H1 (cell line): ENCODE measurements at regions of chr16 and their contacts with region 1.

Region 1: DNA sequence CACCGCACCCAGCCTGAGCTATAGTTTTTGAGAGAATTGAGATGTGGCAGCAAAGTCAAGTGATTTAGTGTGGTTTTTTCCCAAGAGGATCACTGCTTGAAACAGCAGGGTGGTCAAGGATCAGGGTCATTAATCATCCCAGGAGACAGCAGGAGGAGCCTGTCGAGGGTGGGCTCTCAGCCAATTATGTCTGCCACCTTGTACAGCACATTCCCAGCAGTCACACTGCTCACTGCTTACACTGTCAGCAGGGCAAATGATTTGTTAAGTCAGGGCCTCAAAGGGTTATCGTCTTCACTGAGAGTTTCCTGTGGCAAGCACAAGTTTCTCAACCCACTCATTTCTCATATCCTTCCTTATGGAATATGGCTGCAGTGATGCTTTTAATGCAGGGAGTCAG is 13.2 kb downstream of the B3GNT9 start:
- DNase-seq: no peak
- H3K4me3 ChIP-seq: no peak overlapping the region
- H3K27ac ChIP-seq: no peak overlapping the region
- H3K4me1 ChIP-seq: no peaks in the 10 kb centered on the region
- H3K27me3 ChIP-seq: no peaks in the 10 kb centered on the region
- CTCF ChIP-seq: no peak
- EP300 ChIP-seq: no peak
- POLR2A ChIP-seq: no peak
- RAD21 ChIP-seq: no peak

Region 2: GRCh38 chr16:67055712-67056487 is 81.7 kb before region 1 on chr16:
- CTCF ChIA-PET with region 1: no interaction called
- POLR2A ChIA-PET with region 1: no interaction called
- DNase-seq: no peak
- H3K4me3 ChIP-seq: no peak overlapping the region
- H3K27ac ChIP-seq: no peak overlapping the region
- H3K4me1 ChIP-seq: no peaks in the 10 kb centered on the region
- H3K27me3 ChIP-seq: no peaks in the 10 kb centered on the region
- CTCF ChIP-seq: no peak
- EP300 ChIP-seq: no peak
- POLR2A ChIP-seq: no peak
- RAD21 ChIP-seq: no peak

Region 3: DNA sequence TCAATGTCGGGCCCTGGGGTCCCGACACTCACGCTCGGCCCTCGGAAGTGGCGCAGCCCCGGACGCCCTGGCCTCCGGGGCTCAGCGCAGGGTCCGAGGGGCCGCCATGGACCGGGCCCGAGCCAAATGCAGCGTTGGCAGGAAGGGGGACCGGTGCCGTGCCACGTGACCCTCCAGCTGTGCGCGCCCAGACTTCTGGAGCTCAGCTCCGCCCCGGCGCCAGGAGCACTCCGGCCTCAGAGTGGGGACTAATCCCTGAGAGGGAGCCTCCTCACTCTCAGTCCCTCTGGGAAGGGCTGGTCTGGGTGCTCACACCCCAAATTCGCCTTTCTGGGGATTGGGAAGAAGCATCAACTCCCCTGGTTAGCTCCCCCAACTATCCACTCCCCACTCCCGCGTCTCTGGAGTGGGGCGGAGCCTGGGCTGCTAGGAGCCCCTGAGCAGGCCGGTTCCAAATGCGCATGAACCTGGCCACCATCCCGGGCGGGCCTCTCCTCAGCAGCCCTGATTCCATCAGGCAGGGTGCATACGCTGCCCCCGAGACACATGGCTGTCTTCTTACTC is 13.3 kb after region 1 on chr16 and contains the start of gene B3GNT9:
- CTCF ChIA-PET with region 1: interaction called, 10 read pairs
- POLR2A ChIA-PET with region 1: no interaction called
- DNase-seq: peak in 1 of 2 experiments; percentile 88
- H3K4me3 ChIP-seq: peak within 1 kb of the TSS; percentile 62 to 75 (median 72)
- H3K27ac ChIP-seq: no peak within 1 kb of the TSS
- H3K4me1 ChIP-seq: peaks cover 0 to 13% (median 9%) of the 10 kb centered on the region in 4 experiments; a peak in 5 of 7 replicates
- H3K27me3 ChIP-seq: peaks cover 34 to 56% (median 47%) of the 10 kb centered on the region in 4 experiments
- CTCF ChIP-seq: no peak
- EP300 ChIP-seq: no peak
- POLR2A ChIP-seq: no peak
- RAD21 ChIP-seq: no peak
- total RNA-seq, gene B3GNT9: 3.5 and 4.7 TPM in 2 replicates

Region 4: GRCh38 chr16:67173808-67174705 is 36.5 kb after region 1 on chr16:
- CTCF ChIA-PET with region 1: interaction called, 13 read pairs
- POLR2A ChIA-PET with region 1: interaction called, 3 read pairs
- DNase-seq: peak in 1 of 2 experiments; percentile 78
- H3K4me3 ChIP-seq: peak overlapping the region; percentile 27 to 57 (median 34)
- H3K27ac ChIP-seq: no peak overlapping the region
- H3K4me1 ChIP-seq: peaks cover 0 to 40% (median 30%) of the 10 kb centered on the region in 4 experiments; a peak in 6 of 7 replicates
- H3K27me3 ChIP-seq: peaks cover 50 to 90% (median 86%) of the 10 kb centered on the region in 4 experiments
- CTCF ChIP-seq: peak in 2 of 3 experiments; percentile 14 to 15; a peak in 2 of 4 replicates
- EP300 ChIP-seq: no peak
- POLR2A ChIP-seq: no peak
- RAD21 ChIP-seq: peak; percentile 7 to 23; a peak in 2 of 4 replicates